CD8-positive, alpha-beta T cell (primary cell): ENCODE measurements at regions of chr2 and their contacts with region 1.

Region 1: DNA sequence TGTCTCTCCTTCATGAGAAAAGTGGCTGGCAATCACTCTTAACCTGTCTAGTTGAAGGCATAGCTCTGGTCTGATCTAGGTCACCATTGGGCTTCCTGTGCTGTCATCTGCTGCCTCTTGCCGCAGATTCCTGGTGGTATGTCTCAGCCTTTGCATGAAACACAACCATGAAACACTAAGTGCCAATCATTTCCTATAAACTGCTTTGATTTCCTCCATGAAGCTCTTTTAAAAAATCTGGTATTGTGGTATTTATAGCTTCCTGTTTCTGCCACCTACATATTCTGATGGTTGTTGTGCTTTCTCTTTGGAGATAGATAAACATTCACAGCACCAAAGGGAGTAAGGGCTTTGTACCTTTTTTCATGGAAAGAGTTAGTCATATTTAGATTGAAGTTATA is 120.0 kb upstream of the EPC2 start:
- DNase-seq: peak in 8 of 9 experiments; percentile 19 to 86 (median 60)
- ATAC-seq: peak; percentile 91
- H3K4me3 ChIP-seq: no peak overlapping the region
- H3K4me3 Mint-ChIP-seq: peak overlapping the region; percentile 53
- H3K27ac ChIP-seq: peak overlapping the region; percentile 25 to 26
- H3K27ac Mint-ChIP-seq: peak overlapping the region; percentile 84
- H3K4me1 ChIP-seq: peaks cover 90% of the 10 kb centered on the region
- H3K4me1 Mint-ChIP-seq: peaks cover 90% of the 10 kb centered on the region
- H3K27me3 ChIP-seq: no peaks in the 10 kb centered on the region
- H3K27me3 Mint-ChIP-seq: no peaks in the 10 kb centered on the region
- CTCF ChIP-seq: no peak

Region 2: DNA sequence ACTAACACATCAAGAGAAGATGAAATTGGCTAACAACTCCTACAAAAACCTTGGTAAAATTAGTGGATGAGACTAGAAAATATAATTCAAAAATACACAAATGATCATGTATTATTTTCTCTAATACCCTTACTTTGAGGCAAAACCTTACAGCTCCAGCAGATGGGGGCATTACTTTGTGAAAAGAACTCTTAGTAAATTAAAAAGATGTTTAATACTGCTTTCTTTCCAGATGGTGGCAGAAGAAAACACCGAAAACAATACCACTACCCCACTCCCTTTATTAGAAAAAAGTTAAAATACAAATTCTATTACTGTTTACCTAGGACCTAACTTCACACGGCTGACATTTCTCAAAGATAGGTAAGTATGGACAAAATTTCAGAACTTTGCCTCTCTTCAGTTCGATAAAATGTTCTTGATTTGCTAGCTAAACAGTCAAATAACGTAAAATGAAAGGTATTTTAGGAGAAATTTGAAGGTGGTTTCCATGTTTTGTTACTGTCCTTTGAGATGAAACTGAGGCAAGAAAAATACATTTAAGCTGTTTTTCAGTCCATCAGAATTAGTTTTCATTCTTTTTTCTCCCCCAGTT is 534.6 kb before region 1 on chr2:
- CTCF ChIA-PET with region 1: interaction called, 11 read pairs
- POLR2A ChIA-PET with region 1: no interaction called
- intact Hi-C with region 1: no loop called
- DNase-seq: peak in 4 of 9 experiments; percentile 29 to 70 (median 45)
- ATAC-seq: peak; percentile 92
- H3K4me3 ChIP-seq: no peak overlapping the region
- H3K4me3 Mint-ChIP-seq: no peak overlapping the region
- H3K27ac ChIP-seq: no peak overlapping the region
- H3K27ac Mint-ChIP-seq: peak overlapping the region; percentile 11
- H3K4me1 ChIP-seq: no peaks in the 10 kb centered on the region
- H3K4me1 Mint-ChIP-seq: peaks cover 26% of the 10 kb centered on the region
- H3K27me3 ChIP-seq: no peaks in the 10 kb centered on the region
- H3K27me3 Mint-ChIP-seq: no peaks in the 10 kb centered on the region
- CTCF ChIP-seq: peak; percentile 99

Region 3: DNA sequence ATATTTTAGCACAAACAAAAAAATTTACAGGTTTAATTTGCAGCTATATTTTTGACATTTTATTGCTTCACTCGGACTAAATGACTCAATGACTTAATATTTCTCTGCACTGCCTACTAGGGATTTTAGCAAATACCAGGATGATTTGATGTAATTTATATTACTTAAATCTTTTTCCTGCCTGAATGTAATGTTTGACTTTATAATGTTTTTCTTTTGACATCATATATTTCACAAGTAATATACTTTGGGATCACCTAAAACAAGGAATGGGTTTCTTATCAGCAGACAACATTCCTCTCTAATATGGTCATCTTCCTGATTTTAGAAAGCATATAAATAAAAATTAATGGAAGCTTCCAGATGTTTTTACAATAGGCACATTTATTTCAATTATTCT is 133.2 kb before region 1 on chr2:
- CTCF ChIA-PET with region 1: no interaction called
- POLR2A ChIA-PET with region 1: no interaction called
- intact Hi-C with region 1: no loop called
- DNase-seq: no peak
- ATAC-seq: no peak
- H3K4me3 ChIP-seq: no peak overlapping the region
- H3K4me3 Mint-ChIP-seq: no peak overlapping the region
- H3K27ac ChIP-seq: no peak overlapping the region
- H3K27ac Mint-ChIP-seq: no peak overlapping the region
- H3K4me1 ChIP-seq: no peaks in the 10 kb centered on the region
- H3K4me1 Mint-ChIP-seq: no peaks in the 10 kb centered on the region
- H3K27me3 ChIP-seq: no peaks in the 10 kb centered on the region
- H3K27me3 Mint-ChIP-seq: no peaks in the 10 kb centered on the region
- CTCF ChIP-seq: no peak

Region 4: GRCh38 chr2:148509288-148509902 is 15.1 kb before region 1 on chr2:
- CTCF ChIA-PET with region 1: interaction called, 29 read pairs
- POLR2A ChIA-PET with region 1: interaction called, 7 read pairs
- intact Hi-C with region 1: loop called in 1 of 2 experiments (anchors 2 kb)
- DNase-seq: peak; percentile 70 to 88 (median 84)
- ATAC-seq: peak; percentile 100
- H3K4me3 ChIP-seq: peak overlapping the region; percentile 16 to 31
- H3K4me3 Mint-ChIP-seq: peak overlapping the region; percentile 55
- H3K27ac ChIP-seq: no peak overlapping the region
- H3K27ac Mint-ChIP-seq: peak overlapping the region; percentile 41
- H3K4me1 ChIP-seq: peaks cover 10% of the 10 kb centered on the region
- H3K4me1 Mint-ChIP-seq: peaks cover 9% of the 10 kb centered on the region
- H3K27me3 ChIP-seq: no peaks in the 10 kb centered on the region
- H3K27me3 Mint-ChIP-seq: no peaks in the 10 kb centered on the region
- CTCF ChIP-seq: peak; percentile 86

Region 5: GRCh38 chr2:148552675-148553331 is 28.3 kb after region 1 on chr2:
- CTCF ChIA-PET with region 1: interaction called, 4 read pairs
- POLR2A ChIA-PET with region 1: interaction called, 14 read pairs
- intact Hi-C with region 1: loop called (anchors 1 to 5 kb)
- DNase-seq: peak in 4 of 9 experiments; percentile 41 to 72 (median 52)
- ATAC-seq: peak; percentile 85
- H3K4me3 ChIP-seq: peak overlapping the region; percentile 43 to 65
- H3K4me3 Mint-ChIP-seq: no peak overlapping the region
- H3K27ac ChIP-seq: peak overlapping the region; percentile 44 to 79
- H3K27ac Mint-ChIP-seq: no peak overlapping the region
- H3K4me1 ChIP-seq: peaks cover 17% of the 10 kb centered on the region
- H3K4me1 Mint-ChIP-seq: no peaks in the 10 kb centered on the region
- H3K27me3 ChIP-seq: no peaks in the 10 kb centered on the region
- H3K27me3 Mint-ChIP-seq: no peaks in the 10 kb centered on the region
- CTCF ChIP-seq: no peak

Region 6: GRCh38 chr2:148565272-148565894 is 40.9 kb after region 1 on chr2:
- CTCF ChIA-PET with region 1: no interaction called
- POLR2A ChIA-PET with region 1: interaction called, 4 read pairs
- intact Hi-C with region 1: loop called in 1 of 2 experiments (anchors 5 kb)
- DNase-seq: no peak
- ATAC-seq: no peak
- H3K4me3 ChIP-seq: no peak overlapping the region
- H3K4me3 Mint-ChIP-seq: no peak overlapping the region
- H3K27ac ChIP-seq: no peak overlapping the region
- H3K27ac Mint-ChIP-seq: no peak overlapping the region
- H3K4me1 ChIP-seq: peaks cover 8% of the 10 kb centered on the region
- H3K4me1 Mint-ChIP-seq: peaks cover 14% of the 10 kb centered on the region
- H3K27me3 ChIP-seq: no peaks in the 10 kb centered on the region
- H3K27me3 Mint-ChIP-seq: no peaks in the 10 kb centered on the region
- CTCF ChIP-seq: no peak

Region 7: DNA sequence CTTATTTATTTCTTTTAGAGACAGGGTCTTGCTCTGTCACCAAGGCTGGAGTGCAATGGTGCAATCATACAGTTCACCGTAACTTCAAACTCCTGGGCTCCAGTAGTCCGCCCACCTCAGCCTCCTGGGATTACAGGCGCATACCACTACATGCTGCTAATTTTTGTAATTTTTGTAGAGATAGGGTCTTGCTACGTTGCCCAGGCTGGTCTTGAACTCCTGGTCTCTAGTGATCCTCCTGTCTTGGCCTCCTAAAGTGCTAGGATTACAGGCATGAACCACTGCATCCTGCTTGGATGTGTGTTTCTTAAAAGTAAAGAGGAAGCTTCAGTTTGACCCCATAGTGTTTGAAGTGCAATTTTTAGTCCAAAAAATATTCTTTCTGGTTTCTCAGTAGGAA is 245.5 kb after region 1 on chr2:
- CTCF ChIA-PET with region 1: no interaction called
- POLR2A ChIA-PET with region 1: no interaction called
- intact Hi-C with region 1: loop called in 1 of 2 experiments (anchors 10 kb)
- DNase-seq: no peak
- ATAC-seq: no peak
- H3K4me3 ChIP-seq: no peak overlapping the region
- H3K4me3 Mint-ChIP-seq: no peak overlapping the region
- H3K27ac ChIP-seq: no peak overlapping the region
- H3K27ac Mint-ChIP-seq: no peak overlapping the region
- H3K4me1 ChIP-seq: no peaks in the 10 kb centered on the region
- H3K4me1 Mint-ChIP-seq: peaks cover 3% of the 10 kb centered on the region
- H3K27me3 ChIP-seq: no peaks in the 10 kb centered on the region
- H3K27me3 Mint-ChIP-seq: no peaks in the 10 kb centered on the region
- CTCF ChIP-seq: no peak